BJ (cell line): ENCODE measurements at regions of chr9 and their contacts with region 1.

Region 1: GRCh38 chr9:127423934-127424675 is at the start of gene ZNF79:
- DNase-seq: peak; percentile 56
- H3K4me3 ChIP-seq: peak within 1 kb of the TSS; percentile 83
- H3K27me3 ChIP-seq: no peaks in the 10 kb centered on the region
- CTCF ChIP-seq: no peak
- polyA plus RNA-seq, gene ZNF79: 5.3 and 6.9 TPM in 2 replicates

Region 2: DNA sequence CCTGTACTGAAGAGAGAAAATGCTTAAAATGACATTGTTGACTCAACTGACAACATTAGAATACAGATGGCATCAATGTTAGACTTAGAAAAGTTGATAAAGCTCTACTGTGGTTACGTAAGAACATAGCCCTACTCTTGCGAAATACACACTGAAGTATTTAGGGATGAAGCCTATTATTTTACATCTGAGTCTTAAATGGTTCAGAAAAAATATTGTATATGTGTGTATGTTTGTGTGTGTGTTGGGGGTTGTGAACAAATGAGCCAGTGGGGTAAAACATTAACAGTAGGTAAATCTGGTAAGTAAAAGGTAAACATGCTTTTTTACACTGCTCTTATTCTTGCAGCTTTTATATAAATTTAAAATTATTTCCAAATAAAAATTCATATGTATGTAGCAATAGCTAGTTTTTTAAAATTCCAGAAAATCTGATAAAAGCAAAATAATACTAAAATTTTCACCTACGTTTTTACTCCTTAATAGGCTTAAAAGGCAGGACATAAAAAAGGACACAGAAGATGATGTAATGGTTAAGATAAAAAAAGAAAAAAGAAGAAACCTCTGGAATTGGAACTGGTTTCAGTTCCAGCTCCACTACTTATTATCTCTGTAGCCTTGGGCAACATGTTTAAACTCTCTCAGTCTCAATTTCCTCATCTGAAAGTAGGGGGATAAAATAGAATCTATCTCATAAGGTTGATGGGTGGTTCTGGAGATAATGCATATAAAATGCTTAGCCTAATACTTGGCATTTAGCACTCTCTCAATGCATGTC is 115.3 kb before region 1 on chr9:
- CTCF ChIA-PET with region 1: no interaction called
- POLR2A ChIA-PET with region 1: interaction called, 11 read pairs
- DNase-seq: no peak
- H3K4me3 ChIP-seq: no peak overlapping the region
- H3K27me3 ChIP-seq: no peaks in the 10 kb centered on the region
- CTCF ChIP-seq: no peak

Region 3: DNA sequence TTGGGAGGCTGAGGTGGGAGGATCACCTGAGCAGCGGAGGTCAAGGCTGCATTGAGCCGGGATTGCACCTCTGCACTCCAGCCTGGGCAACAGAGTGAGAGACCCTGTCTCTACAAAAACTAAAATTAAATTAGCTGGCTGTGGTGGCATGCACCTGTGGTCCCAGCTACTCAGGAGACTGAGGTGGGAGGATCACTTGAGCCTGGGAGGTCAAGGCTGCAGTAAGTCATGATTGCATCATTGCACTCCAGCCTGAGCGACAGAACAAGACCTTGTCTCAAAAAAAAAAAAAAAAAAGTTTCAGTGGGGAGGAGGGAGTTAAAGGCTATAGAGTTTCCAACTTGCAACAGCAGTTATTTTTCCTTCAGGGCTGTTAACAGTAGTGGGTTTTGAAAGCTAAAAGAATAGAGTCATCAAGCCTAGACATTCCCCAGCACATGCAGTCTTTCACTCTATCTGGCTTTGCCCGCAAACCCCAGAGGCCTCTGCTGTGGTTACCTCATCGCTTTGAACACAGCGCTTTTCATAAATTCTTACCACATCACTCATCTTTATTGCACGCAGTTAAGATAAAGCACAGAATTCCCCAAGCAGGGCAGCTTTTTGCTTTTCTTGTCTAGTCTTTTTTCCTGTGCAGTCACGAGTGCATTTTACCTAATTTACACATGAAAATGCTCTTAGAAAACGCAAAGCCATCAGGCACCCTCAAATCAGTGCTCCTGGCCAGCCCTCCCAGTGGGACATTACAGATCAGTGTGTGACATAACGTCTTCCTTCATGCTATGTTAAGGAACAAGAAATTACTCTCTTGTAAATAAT is 35.9 kb before region 1 on chr9:
- CTCF ChIA-PET with region 1: no interaction called
- POLR2A ChIA-PET with region 1: interaction called, 11 read pairs
- DNase-seq: peak; percentile 92
- H3K4me3 ChIP-seq: no peak overlapping the region
- H3K27me3 ChIP-seq: peaks cover 5% of the 10 kb centered on the region
- CTCF ChIP-seq: no peak

Region 4: GRCh38 chr9:128067876-128068613 is 643.9 kb after region 1 on chr9 and contains the start of gene SLC25A25:
- CTCF ChIA-PET with region 1: no interaction called
- POLR2A ChIA-PET with region 1: no interaction called
- DNase-seq: peak; percentile 95
- H3K4me3 ChIP-seq: peak within 1 kb of the TSS; percentile 76
- H3K27me3 ChIP-seq: no peaks in the 10 kb centered on the region
- CTCF ChIP-seq: no peak
- polyA plus RNA-seq, gene SLC25A25: 10.2 and 12.9 TPM in 2 replicates